ENCODE measurements at regions of chr10 and their contacts with region 1.

Region 1: DNA sequence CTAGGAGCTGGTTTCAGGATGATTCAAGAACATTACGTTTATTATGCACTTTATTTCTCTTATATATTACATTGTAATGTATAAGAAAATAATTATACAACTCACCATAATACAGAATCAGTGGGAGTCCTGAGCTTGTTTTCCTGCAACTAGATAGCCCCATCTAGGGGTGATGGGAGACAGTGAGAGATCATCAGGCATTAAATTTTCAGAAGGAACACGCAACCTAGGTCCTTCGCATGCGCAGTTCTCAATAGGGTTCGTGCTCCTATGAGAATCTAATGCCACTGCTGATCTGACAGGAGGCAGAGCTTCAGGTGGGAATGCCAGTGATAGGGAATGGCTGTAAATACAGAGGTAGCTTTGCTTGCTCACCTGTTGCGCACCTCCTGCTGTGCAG is 137.9 kb downstream of the ANKRD30A start:
- DNase-seq: peak; percentile 3
- H3K4me3 Mint-ChIP-seq: no peak overlapping the region
- H3K27ac Mint-ChIP-seq: no peak overlapping the region
- H3K4me1 Mint-ChIP-seq: no peaks in the 10 kb centered on the region
- H3K27me3 Mint-ChIP-seq: no peaks in the 10 kb centered on the region
- CTCF ChIP-seq: no peak

Region 2: GRCh38 chr10:36899651-36900050 is 363.7 kb before region 1 on chr10:
- CTCF ChIA-PET with region 1: no interaction called
- intact Hi-C with region 1: loop called (anchors 5 kb)
- DNase-seq: no peak
- H3K4me3 Mint-ChIP-seq: no peak overlapping the region
- H3K27ac Mint-ChIP-seq: no peak overlapping the region
- H3K4me1 Mint-ChIP-seq: no peaks in the 10 kb centered on the region
- H3K27me3 Mint-ChIP-seq: no peaks in the 10 kb centered on the region
- CTCF ChIP-seq: no peak

Region 3: GRCh38 chr10:37146443-37146842 is 116.9 kb before region 1 on chr10:
- CTCF ChIA-PET with region 1: no interaction called
- intact Hi-C with region 1: loop called (anchors 10 kb)
- DNase-seq: peak; percentile 16
- H3K4me3 Mint-ChIP-seq: no peak overlapping the region
- H3K27ac Mint-ChIP-seq: no peak overlapping the region
- H3K4me1 Mint-ChIP-seq: no peaks in the 10 kb centered on the region
- H3K27me3 Mint-ChIP-seq: no peaks in the 10 kb centered on the region
- CTCF ChIP-seq: no peak

Region 4: DNA sequence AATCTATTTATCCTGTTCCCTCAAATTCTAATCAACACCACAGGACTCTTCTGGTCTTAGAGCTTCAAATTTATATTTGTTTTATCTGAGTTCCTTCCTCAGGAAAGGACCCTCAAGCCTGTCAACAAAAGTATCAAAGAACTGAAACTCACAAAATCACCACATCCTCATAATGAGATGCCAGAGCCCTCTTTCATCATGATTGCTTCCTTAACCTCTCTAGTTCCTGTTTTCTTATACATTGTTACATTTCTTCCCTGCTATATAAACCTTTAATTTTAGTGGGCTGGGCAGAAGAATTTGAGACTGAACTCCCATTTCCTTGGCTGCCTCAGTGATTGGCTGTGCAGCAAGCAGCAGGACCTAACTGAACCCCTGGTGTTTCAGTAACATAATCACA is 404.4 kb after region 1 on chr10:
- CTCF ChIA-PET with region 1: no interaction called
- intact Hi-C with region 1: no loop called
- DNase-seq: no peak
- H3K4me3 Mint-ChIP-seq: no peak overlapping the region
- H3K27ac Mint-ChIP-seq: no peak overlapping the region
- H3K4me1 Mint-ChIP-seq: no peaks in the 10 kb centered on the region
- H3K27me3 Mint-ChIP-seq: no peaks in the 10 kb centered on the region
- CTCF ChIP-seq: no peak